ENCODE measurements at regions of chr6 and their contacts with region 1.

Region 1: DNA sequence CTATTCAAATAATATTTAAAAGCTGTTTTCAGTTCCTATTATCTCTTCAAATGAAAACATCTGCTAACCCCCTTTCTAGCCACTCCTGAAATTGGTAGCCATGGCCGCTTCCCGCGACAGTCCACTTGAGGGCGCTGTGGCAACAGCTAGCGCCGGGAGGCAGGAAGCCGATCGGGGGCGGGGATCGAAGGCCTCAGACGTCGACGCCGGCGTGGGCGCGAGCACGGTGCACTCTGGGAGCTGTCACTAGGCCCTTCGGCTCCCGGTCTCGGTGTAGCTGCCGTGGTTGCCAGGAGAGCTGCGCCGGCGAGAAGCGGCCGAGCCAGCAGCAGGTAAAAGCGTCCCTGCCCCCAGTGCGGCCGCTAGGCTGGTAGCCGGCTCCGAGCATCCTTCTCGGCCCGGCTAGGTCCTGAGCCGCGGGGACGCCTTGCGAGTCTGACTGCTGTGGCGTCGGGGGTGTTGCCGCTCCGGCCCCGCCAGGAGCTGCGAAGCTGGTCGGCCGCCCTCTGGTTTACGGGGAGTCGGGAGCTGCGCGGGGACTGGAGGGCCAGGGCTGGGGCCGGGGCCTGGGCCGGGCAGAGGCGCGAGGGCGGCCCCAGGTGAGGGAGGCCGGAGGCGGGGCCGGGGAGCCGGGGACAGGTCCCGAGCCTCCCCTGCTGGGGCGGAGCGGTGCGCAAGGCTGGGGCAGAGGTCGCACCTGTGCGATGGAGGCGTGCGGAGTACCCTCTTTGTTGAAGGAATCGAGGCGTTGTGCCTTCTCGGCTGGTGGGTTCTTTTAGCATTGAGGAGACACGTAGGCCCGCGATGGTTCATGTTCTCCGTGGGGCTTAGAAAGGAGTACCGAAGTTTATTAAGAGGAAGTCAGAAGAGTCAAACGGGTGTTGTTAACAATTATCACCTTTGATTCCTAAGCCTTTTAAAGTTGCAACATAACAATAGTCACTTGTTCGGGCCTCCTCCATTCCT is at the start of gene DOP1A:
- DNase-seq: peak; percentile 98
- ATAC-seq: peak; percentile 98
- total RNA-seq, gene DOP1A: 13.4 TPM

Region 2: GRCh38 chr6:82247634-82248232 is 820.0 kb before region 1 on chr6 and contains the start of gene IBTK:
- intact Hi-C with region 1: loop called (anchors 5 kb)
- DNase-seq: peak; percentile 96
- ATAC-seq: peak; percentile 99
- total RNA-seq, gene IBTK: 27.6 TPM

Region 3: DNA sequence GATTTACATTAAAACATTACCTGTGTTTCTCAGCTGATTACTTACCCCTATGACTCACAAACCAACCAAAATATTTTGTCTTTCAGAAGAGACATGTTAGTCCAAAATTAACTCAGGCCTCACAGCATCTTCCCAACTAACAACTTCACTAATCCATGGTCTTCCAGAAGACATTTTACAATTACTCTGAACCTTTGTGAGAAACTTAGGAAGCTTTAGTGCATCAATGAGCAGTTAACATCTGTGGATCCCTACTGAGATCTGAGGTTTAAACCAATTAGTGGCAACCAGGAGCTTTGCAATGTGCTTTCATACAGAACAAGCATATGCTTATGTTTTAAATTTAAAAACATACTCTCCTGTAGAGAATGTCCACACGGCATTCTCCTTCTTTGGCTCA is 271.8 kb before region 1 on chr6:
- intact Hi-C with region 1: no loop called
- DNase-seq: no peak
- ATAC-seq: no peak

Region 4: GRCh38 chr6:83192871-83193746 is 125.4 kb after region 1 on chr6 and contains the starts of genes PGM3 and RWDD2A:
- intact Hi-C with region 1: loop called (anchors 1 kb)
- DNase-seq: peak; percentile 96
- ATAC-seq: peak; percentile 99
- total RNA-seq, gene PGM3: 12.7 TPM
- total RNA-seq, gene RWDD2A: 2.4 TPM

Region 5: DNA sequence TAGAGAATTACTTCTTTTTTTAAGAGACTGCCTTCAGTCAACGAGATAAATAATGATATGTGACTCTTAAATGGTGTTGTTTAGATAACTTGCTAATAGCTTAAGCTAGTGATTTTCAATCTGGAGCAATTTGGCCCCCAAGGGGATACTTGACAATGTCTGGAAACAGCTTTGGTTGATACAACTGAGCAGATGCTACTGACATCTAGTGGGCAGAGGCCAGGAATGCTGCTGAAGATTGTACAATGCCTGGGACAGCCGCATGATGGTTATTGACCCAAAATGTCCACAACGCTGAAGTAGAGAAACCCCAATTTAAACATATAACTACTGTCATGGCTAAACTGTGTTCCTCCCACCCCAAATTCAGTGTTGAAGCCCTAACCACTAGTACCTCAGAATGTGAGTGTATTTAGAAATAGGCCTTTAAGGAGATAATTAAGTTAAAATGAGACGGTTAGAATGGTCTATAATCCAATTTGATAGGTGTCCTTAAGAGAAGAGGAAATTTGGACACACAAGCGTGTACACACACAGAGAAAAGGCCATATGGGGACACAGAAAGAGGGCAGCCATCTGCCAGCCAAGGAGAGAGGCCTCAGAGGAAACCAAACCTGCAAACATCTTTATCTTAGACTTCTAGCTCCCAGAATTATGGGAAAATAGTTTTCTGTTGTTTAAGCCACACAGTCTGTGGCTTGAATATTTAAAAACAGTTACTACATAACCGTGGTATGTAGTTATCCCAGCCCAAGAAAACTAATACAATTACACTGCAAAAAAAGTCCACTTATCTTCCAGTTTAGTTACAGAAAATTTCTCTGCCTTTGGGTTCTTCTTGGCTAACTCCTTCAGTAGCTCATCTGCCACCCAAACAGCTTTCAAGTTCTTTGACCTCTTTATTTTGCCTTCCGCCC is 147.7 kb after region 1 on chr6:
- intact Hi-C with region 1: loop called (anchors 2 kb)
- DNase-seq: no peak
- ATAC-seq: peak; percentile 93